ENCODE measurements at regions of chr16 and their contacts with region 1.

Region 1: GRCh38 chr16:56964243-56965148 is 2.7 kb downstream of the CETP start:
- DNase-seq: peak; percentile 90
- CTCF ChIP-seq: peak; percentile 99

Region 2: DNA sequence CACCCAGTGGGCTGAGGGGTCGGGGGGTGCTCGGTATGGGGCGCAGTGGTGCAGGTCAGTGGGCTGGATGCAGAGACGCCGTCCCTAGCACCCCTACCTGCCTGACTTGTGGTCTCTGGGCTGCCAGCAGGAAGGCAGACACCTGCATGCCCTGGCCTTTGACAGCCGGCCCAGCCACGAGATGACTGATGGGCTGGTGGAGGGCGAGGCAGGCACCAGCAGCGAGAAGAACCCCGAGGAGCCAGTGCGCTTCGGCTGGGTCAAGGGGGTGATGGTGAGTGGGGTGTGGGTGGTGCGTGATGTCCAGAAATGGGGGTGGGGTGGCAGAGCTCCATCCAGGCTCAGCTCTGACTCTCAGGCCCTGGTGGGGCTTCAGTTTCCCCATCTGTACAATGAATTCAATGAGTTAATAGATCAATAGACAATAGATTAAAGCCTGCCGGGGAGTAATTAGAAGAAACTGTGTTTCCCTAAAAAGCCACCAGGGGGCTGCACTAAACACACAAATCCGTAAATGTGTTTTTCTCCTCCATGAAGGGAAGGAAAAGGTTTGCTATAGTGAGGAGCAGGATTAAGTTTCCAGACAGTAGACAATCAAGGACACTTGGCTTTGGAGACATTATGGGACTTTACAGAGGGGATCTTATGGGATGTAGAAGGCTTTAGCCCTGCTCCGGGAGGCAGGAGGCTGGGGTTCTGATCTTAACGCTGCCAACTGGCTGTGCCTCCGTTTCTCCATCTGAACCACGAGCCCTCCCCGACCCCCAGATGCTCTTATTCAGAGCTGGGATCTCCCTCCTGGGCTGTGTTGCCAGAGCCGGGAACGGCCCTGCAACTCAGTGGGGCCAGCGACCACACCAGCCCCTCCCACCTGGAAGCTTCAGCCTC is 97.3 kb before region 1 on chr16:
- CTCF ChIA-PET with region 1: interaction called, 53 read pairs
- POLR2A ChIA-PET with region 1: no interaction called
- DNase-seq: peak; percentile 72
- CTCF ChIP-seq: peak; percentile 59

Region 3: DNA sequence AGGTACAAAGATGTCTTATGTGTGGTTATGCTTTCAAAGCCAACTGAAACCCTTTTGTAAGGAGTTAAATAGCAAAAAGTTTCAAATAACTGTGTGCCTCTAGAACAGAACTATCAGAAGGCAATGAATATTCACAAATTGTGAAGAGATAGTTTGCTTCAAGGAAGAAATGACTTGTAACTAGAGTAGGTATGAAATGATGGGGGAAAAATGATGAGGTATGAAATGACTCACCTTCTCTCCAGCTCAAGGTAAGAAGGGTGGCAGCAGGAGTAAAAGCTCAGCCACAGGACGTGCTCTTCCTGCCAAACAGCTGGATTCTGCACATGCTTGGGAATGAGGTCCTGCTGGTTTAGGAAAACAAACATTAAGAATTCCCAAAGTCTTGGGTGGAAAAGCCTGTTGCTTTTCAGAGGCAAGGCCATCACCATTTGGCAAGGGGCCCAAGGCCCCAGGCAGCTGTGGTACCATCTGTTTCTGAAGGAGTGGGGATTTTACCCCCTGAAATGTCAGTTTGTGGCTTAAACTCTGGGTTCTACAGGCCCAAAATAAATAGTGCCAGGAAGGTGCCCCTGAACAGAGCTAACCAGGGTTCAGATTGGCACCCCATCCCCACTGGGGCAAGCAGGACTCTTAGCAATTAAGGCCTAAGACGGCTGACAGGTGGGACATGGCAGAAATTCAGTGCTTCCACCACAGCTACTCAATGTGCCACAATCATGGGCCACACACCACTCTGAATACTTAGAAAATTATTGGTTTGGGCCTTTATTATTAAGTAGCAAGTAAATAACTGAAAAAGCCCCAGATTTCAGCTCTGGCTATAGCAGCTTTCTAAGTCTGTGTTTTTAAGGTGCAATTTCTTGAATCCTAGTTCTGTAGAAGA is 19.3 kb before region 1 on chr16:
- CTCF ChIA-PET with region 1: interaction called, 209 read pairs
- POLR2A ChIA-PET with region 1: interaction called, 4 read pairs
- DNase-seq: no peak
- CTCF ChIP-seq: no peak

Region 4: DNA sequence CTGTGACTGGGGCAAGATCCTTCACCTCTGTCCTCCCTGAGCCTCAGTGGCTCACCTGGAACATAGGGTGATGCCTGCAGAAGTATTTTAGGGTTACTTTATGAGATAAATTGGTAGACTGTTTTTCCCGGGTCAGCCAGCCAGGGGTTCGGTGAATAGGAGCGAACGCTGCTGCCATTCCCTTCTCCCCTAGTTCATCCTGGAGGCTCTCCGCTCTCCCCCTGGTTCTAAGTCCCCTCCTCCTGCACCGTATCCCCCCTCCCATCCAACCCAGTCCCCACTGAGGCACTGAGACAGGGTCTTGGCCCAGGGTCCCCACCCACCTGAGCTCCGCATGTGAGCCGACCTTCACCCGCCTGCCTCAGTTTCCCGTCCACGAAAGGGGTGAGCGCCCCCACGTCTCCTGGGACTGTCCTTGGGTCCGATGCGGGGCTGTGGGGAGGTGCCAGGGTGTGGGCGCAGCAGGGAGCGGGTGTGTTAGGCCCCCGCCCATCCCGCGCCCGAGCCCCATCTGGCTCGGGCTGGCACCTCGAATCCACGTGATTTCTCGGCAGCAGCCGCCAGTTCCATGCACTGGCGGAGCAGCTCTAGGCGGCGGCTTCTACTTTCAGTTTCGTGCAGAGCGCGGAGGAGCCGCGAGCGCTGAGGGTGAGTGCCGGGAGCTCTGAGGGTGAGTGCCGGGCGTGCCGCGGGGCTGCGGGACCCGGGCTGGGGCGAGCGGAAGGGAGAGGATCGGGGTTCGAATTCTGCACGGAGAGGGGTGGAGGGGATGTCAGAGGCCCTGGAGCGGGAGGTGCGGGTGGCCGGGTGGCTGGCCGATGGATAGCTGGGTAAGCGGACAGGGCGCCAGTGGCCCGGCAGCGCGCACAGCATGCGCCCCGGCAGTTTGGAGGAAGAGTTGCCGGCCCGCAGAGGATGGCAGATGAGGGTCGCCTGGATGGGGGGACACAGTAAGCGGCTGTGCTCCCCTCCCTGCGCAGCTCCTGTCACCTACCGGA is 24.8 kb after region 1 on chr16 and contains the start of gene NLRC5:
- CTCF ChIA-PET with region 1: interaction called, 376 read pairs
- POLR2A ChIA-PET with region 1: no interaction called
- DNase-seq: peak; percentile 89
- CTCF ChIP-seq: no peak

Region 5: GRCh38 chr16:57013229-57013628 is 48.7 kb after region 1 on chr16:
- CTCF ChIA-PET with region 1: interaction called, 33 read pairs
- POLR2A ChIA-PET with region 1: no interaction called
- DNase-seq: no peak
- CTCF ChIP-seq: no peak

Region 6: GRCh38 chr16:57045694-57046381 is 81.3 kb after region 1 on chr16:
- CTCF ChIA-PET with region 1: interaction called, 58 read pairs
- POLR2A ChIA-PET with region 1: no interaction called
- DNase-seq: peak; percentile 81
- CTCF ChIP-seq: peak; percentile 86